ENCODE measurements at regions of chr17 and their contacts with region 1.

Region 1: DNA sequence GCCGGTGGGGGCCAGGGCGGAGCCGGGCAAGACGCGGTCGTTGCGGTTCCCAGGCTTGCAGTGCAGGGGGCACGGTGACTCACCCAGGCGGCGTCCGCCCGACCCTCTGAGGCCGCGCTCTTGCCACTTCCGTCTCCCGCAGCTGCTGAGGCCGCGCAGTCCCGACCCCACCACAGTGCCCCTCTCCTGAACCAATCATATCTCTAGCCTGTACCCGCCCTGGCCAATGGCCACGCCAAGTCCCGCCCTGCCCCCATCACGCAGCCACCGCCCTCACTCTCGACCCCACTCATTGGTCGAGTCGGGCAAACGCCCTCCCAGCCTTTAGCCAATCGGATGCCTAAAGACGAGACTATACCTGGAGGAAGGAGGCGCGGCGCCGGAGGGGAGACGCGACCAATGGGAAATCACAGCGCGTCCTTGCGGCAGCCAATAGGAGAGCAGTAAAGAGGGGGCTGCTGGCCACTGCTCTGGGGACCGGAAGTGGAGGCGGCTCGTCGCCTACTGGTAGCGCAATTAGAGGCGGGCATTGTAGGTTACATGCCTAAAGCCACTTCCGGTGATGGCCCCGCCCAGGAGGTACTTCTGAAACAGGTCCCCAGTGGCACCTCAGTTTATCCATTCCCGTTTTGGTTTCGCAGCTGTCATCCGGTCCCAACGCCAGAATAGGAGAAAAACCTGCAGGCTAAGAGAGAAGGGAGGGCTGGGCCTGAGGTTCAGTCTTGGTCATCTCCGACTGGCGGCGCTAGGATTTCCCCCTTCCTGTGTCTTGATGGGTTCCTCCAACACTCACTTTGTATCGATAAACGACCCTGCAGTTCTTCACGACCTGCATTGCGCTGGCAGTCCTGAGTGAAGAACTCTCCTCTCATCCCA is 3.5 kb upstream of the MTMR4 start:
- DNase-seq: peak; percentile 100
- H3K4me3 ChIP-seq: peak overlapping the region; percentile 67 to 93 (median 76)
- H3K27ac ChIP-seq: peak overlapping the region; percentile 72
- H3K4me1 ChIP-seq: peaks cover 17% of the 10 kb centered on the region
- H3K27me3 ChIP-seq: no peaks in the 10 kb centered on the region
- CTCF ChIP-seq: no peak

Region 2: GRCh38 chr17:58317421-58318064 is 200.4 kb before region 1 on chr17:
- CTCF ChIA-PET with region 1: no interaction called
- dilution Hi-C with region 1: no loop called
- in situ Hi-C with region 1: no loop called
- intact Hi-C with region 1: loop called (anchors 1 kb)
- DNase-seq: peak; percentile 90
- H3K4me3 ChIP-seq: no peak overlapping the region
- H3K27ac ChIP-seq: no peak overlapping the region
- H3K4me1 ChIP-seq: peaks cover 6% of the 10 kb centered on the region
- H3K27me3 ChIP-seq: no peaks in the 10 kb centered on the region
- CTCF ChIP-seq: peak; percentile 92 to 93

Region 3: DNA sequence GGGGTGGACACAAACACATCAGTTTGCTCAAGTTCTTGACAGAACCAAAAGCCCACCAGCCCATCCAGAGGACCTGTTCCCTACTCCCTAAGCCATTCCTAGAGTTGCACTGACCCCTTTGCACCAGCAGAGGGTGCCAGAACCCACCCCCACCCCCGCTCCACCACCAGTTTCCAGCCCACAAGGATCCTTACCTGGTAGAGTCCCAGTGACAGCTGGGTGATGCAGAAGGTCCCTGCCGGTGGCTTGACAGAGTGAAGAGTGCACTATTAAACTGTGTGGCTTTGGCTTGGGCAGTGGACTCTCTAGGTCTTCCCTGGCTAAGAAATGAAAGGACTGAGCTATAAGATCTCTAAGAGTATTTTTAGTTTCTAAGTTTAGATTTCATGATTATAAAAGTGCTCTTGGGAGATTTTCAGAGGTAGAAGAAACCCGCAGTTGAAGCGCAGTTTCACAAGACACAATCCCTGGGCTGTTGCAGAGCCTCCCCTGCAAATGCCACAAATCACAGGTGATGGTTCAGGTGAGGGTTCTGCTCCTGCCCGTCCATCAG is 69.8 kb after region 1 on chr17:
- CTCF ChIA-PET with region 1: interaction called, 3 read pairs
- dilution Hi-C with region 1: no loop called
- in situ Hi-C with region 1: no loop called
- intact Hi-C with region 1: loop called (anchors 1 kb)
- DNase-seq: peak; percentile 32
- H3K4me3 ChIP-seq: no peak overlapping the region
- H3K27ac ChIP-seq: no peak overlapping the region
- H3K4me1 ChIP-seq: peaks cover 9% of the 10 kb centered on the region
- H3K27me3 ChIP-seq: no peaks in the 10 kb centered on the region
- CTCF ChIP-seq: peak; percentile 87 to 98

Region 4: GRCh38 chr17:58631523-58632323 is 113.8 kb after region 1 on chr17:
- CTCF ChIA-PET with region 1: interaction called, 3 read pairs
- dilution Hi-C with region 1: no loop called
- in situ Hi-C with region 1: loop called in 1 of 2 experiments (anchors 10 kb)
- intact Hi-C with region 1: loop called (anchors 1 kb)
- DNase-seq: peak; percentile 95
- H3K4me3 ChIP-seq: peak overlapping the region; percentile 37 to 47 (median 45)
- H3K27ac ChIP-seq: peak overlapping the region; percentile 100
- H3K4me1 ChIP-seq: peaks cover 4% of the 10 kb centered on the region
- H3K27me3 ChIP-seq: no peaks in the 10 kb centered on the region
- CTCF ChIP-seq: peak; percentile 8 to 43

Region 5: GRCh38 chr17:58679263-58680037 is 161.5 kb after region 1 on chr17:
- CTCF ChIA-PET with region 1: no interaction called
- dilution Hi-C with region 1: no loop called
- in situ Hi-C with region 1: no loop called
- intact Hi-C with region 1: loop called (anchors 1 kb)
- DNase-seq: peak; percentile 97
- H3K4me3 ChIP-seq: no peak overlapping the region
- H3K27ac ChIP-seq: peak overlapping the region; percentile 83
- H3K4me1 ChIP-seq: no peaks in the 10 kb centered on the region
- H3K27me3 ChIP-seq: no peaks in the 10 kb centered on the region
- CTCF ChIP-seq: no peak

Region 6: GRCh38 chr17:58741121-58741625 is 223.2 kb after region 1 on chr17:
- CTCF ChIA-PET with region 1: no interaction called
- dilution Hi-C with region 1: no loop called
- in situ Hi-C with region 1: no loop called
- intact Hi-C with region 1: loop called (anchors 1 kb)
- DNase-seq: peak; percentile 94
- H3K4me3 ChIP-seq: no peak overlapping the region
- H3K27ac ChIP-seq: peak overlapping the region; percentile 4
- H3K4me1 ChIP-seq: peaks cover 12% of the 10 kb centered on the region
- H3K27me3 ChIP-seq: no peaks in the 10 kb centered on the region
- CTCF ChIP-seq: no peak

Region 7: GRCh38 chr17:59155439-59156182 is 637.6 kb after region 1 on chr17 and contains the start of gene PRR11:
- CTCF ChIA-PET with region 1: interaction called, 3 read pairs
- dilution Hi-C with region 1: no loop called
- in situ Hi-C with region 1: no loop called
- intact Hi-C with region 1: loop called (anchors 2 kb)
- DNase-seq: peak; percentile 100
- H3K4me3 ChIP-seq: peak within 1 kb of the TSS; percentile 88 to 98 (median 96)
- H3K27ac ChIP-seq: peak within 1 kb of the TSS; percentile 91
- H3K4me1 ChIP-seq: peaks cover 33% of the 10 kb centered on the region
- H3K27me3 ChIP-seq: no peaks in the 10 kb centered on the region
- CTCF ChIP-seq: no peak
- total RNA-seq, gene PRR11: 8.5 to 59.3 TPM

Measured in mammary epithelial cell (primary cell).